ENCODE measurements at regions of chr2 and their contacts with region 1.

Region 1: GRCh38 chr2:98685930-98686887 is 44.7 kb downstream of the MGAT4A start:
- DNase-seq: no peak
- H3K4me3 ChIP-seq: no peak overlapping the region
- H3K27ac ChIP-seq: no peak overlapping the region
- H3K4me1 ChIP-seq: no peaks in the 10 kb centered on the region
- H3K27me3 ChIP-seq: no peaks in the 10 kb centered on the region
- CTCF ChIP-seq: no peak
- EP300 ChIP-seq: no peak
- POLR2A ChIP-seq: no peak

Region 2: DNA sequence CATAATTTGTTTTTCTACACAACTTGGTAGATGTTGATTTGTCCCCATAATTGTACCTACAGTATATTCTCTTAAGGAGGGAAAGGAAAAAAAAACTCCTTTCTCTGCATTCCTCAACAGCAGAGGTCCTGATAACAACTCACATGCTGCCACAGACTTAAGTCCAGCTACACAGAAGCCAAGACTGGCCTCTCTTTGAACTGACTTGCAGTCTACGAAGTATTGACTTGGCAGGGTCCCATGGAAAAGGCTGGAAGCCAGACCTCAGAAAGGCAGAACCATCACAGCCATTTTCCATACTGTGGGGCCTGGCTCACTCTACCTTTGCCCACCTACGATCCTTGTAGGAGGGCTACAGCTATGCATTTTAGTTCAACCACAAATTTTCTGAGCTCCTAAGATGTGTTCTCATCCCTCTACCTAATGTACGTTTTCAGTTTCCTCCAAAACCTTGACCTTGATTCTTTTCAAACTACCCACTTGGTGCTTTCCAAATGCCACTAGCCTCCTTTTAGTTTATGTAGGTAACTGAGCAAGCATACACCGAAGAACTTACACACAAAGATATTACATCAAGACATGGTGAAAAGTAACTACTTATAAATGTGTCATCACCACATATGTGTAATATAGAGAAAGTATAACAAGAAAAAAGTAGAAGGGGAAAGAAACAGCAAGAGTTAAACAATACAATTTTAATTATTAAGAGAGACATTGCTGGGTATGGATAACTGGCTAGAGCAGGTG is 1623.9 kb after region 1 on chr2:
- intact Hi-C with region 1: loop called in 1 of 4 experiments (anchors 5 kb)
- DNase-seq: peak in 2 of 5 donors; percentile 41 to 47
- H3K4me3 ChIP-seq: no peak overlapping the region
- H3K27ac ChIP-seq: no peak overlapping the region
- H3K4me1 ChIP-seq: peaks cover 5% of the 10 kb centered on the region
- H3K27me3 ChIP-seq: no peaks in the 10 kb centered on the region
- CTCF ChIP-seq: no peak
- EP300 ChIP-seq: no peak
- POLR2A ChIP-seq: no peak